ENCODE measurements at regions of chr3 and their contacts with region 1.

Region 1: DNA sequence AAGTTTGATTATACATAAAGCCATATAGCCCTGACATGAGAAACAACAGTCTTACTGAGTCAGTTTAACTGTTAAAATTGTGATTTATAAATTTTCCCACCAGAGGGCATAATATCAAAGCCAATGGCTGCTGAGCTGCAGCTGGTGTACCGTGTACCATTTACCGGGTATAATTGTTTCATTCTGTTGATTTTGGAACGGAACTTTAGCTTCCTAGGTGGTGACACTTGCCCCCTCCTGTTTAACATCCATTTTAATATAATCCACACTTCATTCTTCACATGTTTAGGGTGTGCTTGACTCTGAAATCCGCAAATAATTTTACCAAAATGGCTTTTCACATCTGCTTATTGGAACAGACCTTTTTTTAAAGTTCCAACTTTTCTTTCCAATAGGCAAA is 72.8 kb downstream of the SLC9A9 start:
- DNase-seq: no peak

Region 2: DNA sequence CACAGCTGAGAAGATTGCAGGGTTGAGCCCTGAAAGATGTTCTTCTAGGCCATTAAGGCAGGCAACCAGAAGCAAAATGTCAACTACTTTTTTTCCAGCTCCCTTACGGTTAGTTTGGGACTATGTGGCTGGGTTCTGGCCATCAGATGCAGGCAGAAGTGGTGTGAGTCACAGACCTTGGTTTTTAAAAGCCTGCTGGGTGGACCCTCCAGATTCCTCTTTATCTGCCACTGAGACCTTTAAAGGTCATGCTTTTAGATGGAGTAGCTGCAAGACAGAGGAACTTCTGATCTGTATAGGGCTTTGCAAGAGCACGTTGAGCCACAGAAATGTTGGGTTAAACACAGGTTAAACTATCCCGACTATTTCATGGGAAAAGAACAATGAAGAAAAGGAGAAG is 553.0 kb before region 1 on chr3:
- intact Hi-C with region 1: no loop called
- DNase-seq: no peak

Region 3: DNA sequence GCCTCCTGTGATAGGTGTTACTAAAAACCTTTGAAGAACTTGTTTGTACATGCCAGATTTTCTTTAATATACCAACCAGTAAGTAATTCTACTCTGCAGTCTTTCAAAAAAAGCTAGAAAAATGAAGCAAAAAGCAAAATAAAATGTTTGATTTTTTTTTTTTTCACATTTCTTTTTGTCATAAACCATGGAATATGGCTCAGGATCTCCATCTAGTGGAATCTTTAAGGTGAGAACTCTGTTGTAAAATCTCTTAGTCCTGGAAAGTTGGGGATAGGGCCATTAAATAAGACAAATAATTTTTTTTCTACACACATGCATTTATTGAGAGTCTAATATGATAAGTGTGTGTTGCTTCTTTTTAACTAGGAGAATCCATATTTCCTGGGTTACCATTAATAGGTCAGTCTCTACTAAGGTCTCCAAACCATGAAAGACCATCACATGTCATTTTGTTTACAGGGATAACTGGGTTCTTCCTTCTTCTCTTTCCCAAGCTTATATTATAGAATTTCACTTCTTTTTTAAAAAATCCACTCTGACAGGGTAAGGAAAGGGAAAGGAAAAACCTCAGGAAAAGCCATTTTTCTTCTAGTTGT is 11.8 kb before region 1 on chr3:
- intact Hi-C with region 1: loop called in 1 of 2 experiments (anchors 1 kb)
- DNase-seq: no peak

Region 4: GRCh38 chr3:143951351-143951971 is 176.0 kb after region 1 on chr3:
- intact Hi-C with region 1: loop called in 1 of 2 experiments (anchors 10 kb)
- DNase-seq: no peak